Heart right ventricle (tissue), 16 donors: ENCODE measurements at regions of chr3 and their contacts with region 1.

Region 1: GRCh38 chr3:53375019-53375418 is 27.7 kb upstream of the DCP1A start:
- DNase-seq: peak; percentile 6 to 65
- ATAC-seq: peak in 7 of 8 donors; percentile 60 to 93 (median 74)
- H3K4me3 ChIP-seq: no peak overlapping the region
- H3K27ac ChIP-seq: no peak overlapping the region
- H3K4me1 ChIP-seq: no peaks in the 10 kb centered on the region
- H3K27me3 ChIP-seq: peaks cover 0 to 16% (median 0%) of the 10 kb centered on the region in 7 donors
- CTCF ChIP-seq: peak; percentile 39 to 78 (median 60)

Region 2: GRCh38 chr3:53729618-53730017 is 354.6 kb after region 1 on chr3:
- intact Hi-C with region 1: no loop called
- DNase-seq: no peak
- ATAC-seq: peak in 4 of 8 donors; percentile 32 to 60 (median 38)
- H3K4me3 ChIP-seq: no peak overlapping the region
- H3K27ac ChIP-seq: no peak overlapping the region
- H3K4me1 ChIP-seq: peaks cover 0 to 12% (median 0%) of the 10 kb centered on the region in 9 donors
- H3K27me3 ChIP-seq: peaks cover 0 to 21% (median 8%) of the 10 kb centered on the region in 7 donors
- CTCF ChIP-seq: peak in 3 of 9 donors; percentile 24 to 27 (median 25)

Region 3: DNA sequence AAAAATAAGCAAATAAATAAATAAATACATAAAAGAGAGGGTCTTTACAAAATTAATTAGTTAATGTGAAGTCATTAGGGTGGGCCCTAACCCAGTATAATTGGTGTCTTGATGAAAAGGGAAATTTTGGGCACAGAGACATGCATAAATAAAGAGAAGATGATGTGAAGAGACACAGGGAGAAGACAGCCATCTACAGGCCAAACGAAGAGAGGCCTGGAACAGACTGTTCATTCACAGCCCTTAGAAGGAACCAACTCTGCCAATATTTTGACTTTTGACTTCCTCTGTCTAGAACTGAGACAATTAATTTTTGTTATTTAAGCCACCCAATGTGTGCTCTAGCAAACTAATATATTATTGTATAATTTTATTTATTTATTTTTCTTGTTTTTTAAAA is 546.3 kb after region 1 on chr3:
- intact Hi-C with region 1: loop called in 1 of 10 experiments (anchors 10 kb)
- DNase-seq: no peak
- ATAC-seq: peak in 1 of 8 donors; percentile 67
- H3K4me3 ChIP-seq: no peak overlapping the region
- H3K27ac ChIP-seq: no peak overlapping the region
- H3K4me1 ChIP-seq: no peaks in the 10 kb centered on the region
- H3K27me3 ChIP-seq: peaks cover 0 to 31% (median 13%) of the 10 kb centered on the region in 7 donors
- CTCF ChIP-seq: peak in 7 of 9 donors; percentile 28 to 55 (median 45)